Gastrocnemius medialis (tissue), 4 donors: ENCODE measurements at regions of chrX and their contacts with region 1.

Region 1: GRCh38 chrX:386768-387575 is at the start of gene PPP2R3B:
- DNase-seq: peak; percentile 99
- ATAC-seq: peak; percentile 98 to 99
- H3K4me3 ChIP-seq: peak within 1 kb of the TSS; percentile 79 to 98 (median 85)
- H3K27ac ChIP-seq: peak within 1 kb of the TSS; percentile 96 to 99 (median 98)
- H3K4me1 ChIP-seq: peaks cover 7% of the 10 kb centered on the region in 2 donors
- H3K27me3 ChIP-seq: no peaks in the 10 kb centered on the region
- CTCF ChIP-seq: peak in 2 of 5 experiments; percentile 32 to 41
- POLR2A ChIP-seq: peak; percentile 46 to 55
- total RNA-seq, gene PPP2R3B: 53.8 to 103 (median 69.4) TPM

Region 2: GRCh38 chrX:318739-319578 is 68.0 kb before region 1 on chrX and contains the start of gene GTPBP6:
- in situ Hi-C with region 1: loop called in 1 of 4 experiments (anchors 10 kb)
- intact Hi-C with region 1: loop called (anchors 5 kb)
- DNase-seq: peak; percentile 100
- ATAC-seq: peak; percentile 75 to 83
- H3K4me3 ChIP-seq: peak within 1 kb of the TSS; percentile 88 to 94 (median 90)
- H3K27ac ChIP-seq: peak within 1 kb of the TSS; percentile 91 to 99 (median 99)
- H3K4me1 ChIP-seq: peaks cover 9 to 22% of the 10 kb centered on the region in 2 donors
- H3K27me3 ChIP-seq: peaks cover 0 to under 1% (median 0%) of the 10 kb centered on the region in 3 donors
- CTCF ChIP-seq: peak in 3 of 5 experiments; percentile 17 to 26 (median 21)
- POLR2A ChIP-seq: peak; percentile 65 to 82
- total RNA-seq, gene GTPBP6: 40.1 to 79.4 (median 46.9) TPM

Region 3: GRCh38 chrX:323721-324628 is 63.0 kb before region 1 on chrX:
- in situ Hi-C with region 1: loop called in 1 of 4 experiments (anchors 10 kb)
- intact Hi-C with region 1: loop called (anchors 5 kb)
- DNase-seq: peak in 1 of 2 donors; percentile 25
- ATAC-seq: peak; percentile 2 to 7
- H3K4me3 ChIP-seq: no peak overlapping the region
- H3K27ac ChIP-seq: no peak overlapping the region
- H3K4me1 ChIP-seq: peaks cover 9 to 19% of the 10 kb centered on the region in 2 donors
- H3K27me3 ChIP-seq: peaks cover 0 to 7% (median 6%) of the 10 kb centered on the region in 3 donors
- CTCF ChIP-seq: peak in 1 of 5 experiments; percentile 30
- POLR2A ChIP-seq: no peak

Region 4: DNA sequence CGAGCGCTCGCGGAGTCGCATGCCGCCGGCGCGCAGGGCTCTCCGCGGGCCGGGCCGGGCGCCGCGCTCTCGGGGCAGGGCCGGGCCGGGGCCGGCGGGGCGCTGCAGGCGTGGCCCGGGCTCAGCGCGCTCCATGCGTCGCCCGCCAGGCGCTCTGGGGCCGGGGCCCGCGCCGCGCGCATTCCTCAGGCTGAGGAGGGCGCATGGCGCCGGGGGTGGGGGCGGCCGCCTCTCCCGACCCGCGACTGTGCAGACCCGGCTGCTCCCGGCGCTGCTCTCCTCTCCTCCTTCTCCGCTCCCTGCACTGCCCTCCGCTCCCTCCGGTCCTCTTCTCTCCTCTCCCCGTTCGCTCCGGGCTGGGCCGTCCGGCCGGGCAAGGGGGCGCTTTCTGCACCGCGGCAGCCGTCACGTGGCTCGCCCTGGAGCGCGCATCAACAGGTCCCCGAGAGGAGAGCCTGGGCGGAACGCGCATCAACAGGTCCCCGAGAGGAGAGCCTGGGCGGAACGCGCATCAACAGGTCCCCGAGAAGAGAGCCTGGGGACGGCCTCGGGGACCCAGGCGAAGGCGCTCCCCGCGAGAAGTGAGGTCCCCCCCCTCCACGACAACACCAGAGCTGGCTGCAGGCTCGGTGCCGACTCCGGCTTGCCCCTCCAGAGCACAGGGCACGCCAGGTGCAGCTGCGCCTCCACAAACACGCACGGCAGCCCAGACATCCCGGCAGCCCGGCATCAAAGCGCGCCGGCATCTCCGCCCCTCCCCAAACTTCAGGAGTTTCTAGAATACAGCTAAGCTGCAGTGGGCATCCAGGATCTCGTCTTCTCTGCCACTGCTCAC is 13.1 kb before region 1 on chrX:
- in situ Hi-C with region 1: no loop called
- intact Hi-C with region 1: loop called (anchors 2 kb)
- DNase-seq: peak; percentile 39 to 44
- ATAC-seq: peak; percentile 16 to 17
- H3K4me3 ChIP-seq: peak overlapping the region; percentile 65 to 69 (median 66)
- H3K27ac ChIP-seq: peak overlapping the region; percentile 89 to 98 (median 94)
- H3K4me1 ChIP-seq: peaks cover 29 to 30% of the 10 kb centered on the region in 2 donors
- H3K27me3 ChIP-seq: no peaks in the 10 kb centered on the region
- CTCF ChIP-seq: no peak
- POLR2A ChIP-seq: peak; percentile 39 to 48

Region 5: DNA sequence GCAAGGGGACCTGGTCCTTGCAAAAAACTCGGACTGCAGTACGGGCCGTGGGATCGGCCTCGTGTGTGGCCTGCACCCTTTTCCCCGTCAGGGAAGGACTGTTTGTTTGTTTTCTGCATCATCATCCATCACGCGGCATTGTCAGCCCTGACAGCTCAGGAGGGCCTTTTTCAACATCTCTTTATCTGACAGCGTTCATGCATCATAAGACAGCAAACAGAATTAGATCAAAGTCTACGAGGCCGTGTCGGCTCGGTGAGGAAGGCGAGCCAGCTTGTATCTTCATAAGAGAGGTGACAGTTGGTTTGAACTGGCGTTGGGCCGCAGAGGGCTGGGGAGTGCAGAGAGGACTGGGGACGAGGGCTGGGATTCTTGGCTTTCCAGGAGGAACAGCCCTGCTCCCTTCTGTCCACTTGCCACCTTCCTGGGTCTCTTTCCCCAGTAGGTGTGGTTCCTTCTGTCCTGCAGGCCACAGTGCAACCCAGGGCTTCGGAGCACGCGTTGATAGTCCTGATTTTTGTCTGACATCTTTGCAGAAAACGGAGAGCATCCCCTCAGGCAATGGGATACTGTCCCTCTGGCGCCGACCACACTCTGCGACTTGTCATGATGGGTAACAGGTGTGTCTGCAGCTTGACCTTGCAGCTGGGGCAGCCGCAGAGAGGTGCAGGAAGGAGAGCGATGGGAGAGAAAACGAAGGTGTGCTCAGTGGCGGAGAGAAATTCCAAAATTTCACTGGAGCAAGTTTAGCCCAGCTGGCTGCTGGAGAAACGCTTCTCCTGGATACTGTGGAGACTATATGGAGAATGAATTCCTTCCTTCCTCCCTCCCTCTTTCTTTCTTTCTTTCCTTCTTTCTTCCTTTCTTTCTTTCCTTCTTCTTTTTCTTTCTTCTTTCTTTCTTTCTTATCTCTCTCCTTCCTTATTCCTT is 139.6 kb after region 1 on chrX:
- in situ Hi-C with region 1: no loop called
- intact Hi-C with region 1: no loop called
- DNase-seq: no peak
- ATAC-seq: no peak
- H3K4me3 ChIP-seq: no peak overlapping the region
- H3K27ac ChIP-seq: no peak overlapping the region
- H3K4me1 ChIP-seq: no peaks in the 10 kb centered on the region
- H3K27me3 ChIP-seq: no peaks in the 10 kb centered on the region
- CTCF ChIP-seq: no peak
- POLR2A ChIP-seq: no peak

Region 6: DNA sequence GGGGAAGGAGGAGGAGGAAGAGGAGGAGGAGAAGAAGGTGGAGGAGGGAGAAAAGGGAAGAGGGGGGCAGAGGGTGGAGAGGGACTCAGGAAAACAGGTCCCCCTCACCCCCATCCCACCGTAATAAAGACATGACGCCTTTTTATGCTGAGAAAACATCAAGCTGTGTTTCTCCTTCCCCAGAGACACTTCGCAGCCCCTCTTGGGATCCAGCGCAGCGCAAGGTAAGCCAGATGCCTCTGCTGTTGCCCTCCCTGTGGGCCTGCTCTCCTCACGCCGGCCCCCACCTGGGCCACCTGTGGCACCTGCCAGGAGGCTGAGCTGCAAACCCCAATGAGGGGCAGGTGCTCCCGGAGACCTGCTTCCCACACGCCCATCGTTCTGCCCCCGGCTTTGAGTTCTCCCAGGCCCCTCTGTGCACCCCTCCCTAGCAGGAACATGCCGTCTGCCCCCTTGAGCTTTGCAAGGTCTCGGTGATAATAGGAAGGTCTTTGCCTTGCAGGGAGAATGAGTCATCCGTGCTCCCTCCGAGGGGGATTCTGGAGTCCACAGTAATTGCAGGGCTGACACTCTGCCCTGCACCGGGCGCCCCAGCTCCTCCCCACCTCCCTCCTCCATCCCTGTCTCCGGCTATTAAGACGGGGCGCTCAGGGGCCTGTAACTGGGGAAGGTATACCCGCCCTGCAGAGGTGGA is 198.3 kb after region 1 on chrX:
- in situ Hi-C with region 1: no loop called
- intact Hi-C with region 1: no loop called
- DNase-seq: no peak
- ATAC-seq: no peak
- H3K4me3 ChIP-seq: no peak overlapping the region
- H3K27ac ChIP-seq: no peak overlapping the region
- H3K4me1 ChIP-seq: no peaks in the 10 kb centered on the region
- H3K27me3 ChIP-seq: no peaks in the 10 kb centered on the region
- CTCF ChIP-seq: no peak
- POLR2A ChIP-seq: no peak